ENCODE measurements at regions of chr12 and their contacts with region 1.

Region 1: GRCh38 chr12:39103552-39104165 is 198.3 kb upstream of the CPNE8 start:
- DNase-seq: peak; percentile 30
- H3K4me3 ChIP-seq: no peak overlapping the region
- H3K27ac ChIP-seq: no peak overlapping the region
- H3K4me1 ChIP-seq: no peaks in the 10 kb centered on the region
- H3K27me3 ChIP-seq: no peaks in the 10 kb centered on the region
- CTCF ChIP-seq: peak; percentile 61

Region 2: DNA sequence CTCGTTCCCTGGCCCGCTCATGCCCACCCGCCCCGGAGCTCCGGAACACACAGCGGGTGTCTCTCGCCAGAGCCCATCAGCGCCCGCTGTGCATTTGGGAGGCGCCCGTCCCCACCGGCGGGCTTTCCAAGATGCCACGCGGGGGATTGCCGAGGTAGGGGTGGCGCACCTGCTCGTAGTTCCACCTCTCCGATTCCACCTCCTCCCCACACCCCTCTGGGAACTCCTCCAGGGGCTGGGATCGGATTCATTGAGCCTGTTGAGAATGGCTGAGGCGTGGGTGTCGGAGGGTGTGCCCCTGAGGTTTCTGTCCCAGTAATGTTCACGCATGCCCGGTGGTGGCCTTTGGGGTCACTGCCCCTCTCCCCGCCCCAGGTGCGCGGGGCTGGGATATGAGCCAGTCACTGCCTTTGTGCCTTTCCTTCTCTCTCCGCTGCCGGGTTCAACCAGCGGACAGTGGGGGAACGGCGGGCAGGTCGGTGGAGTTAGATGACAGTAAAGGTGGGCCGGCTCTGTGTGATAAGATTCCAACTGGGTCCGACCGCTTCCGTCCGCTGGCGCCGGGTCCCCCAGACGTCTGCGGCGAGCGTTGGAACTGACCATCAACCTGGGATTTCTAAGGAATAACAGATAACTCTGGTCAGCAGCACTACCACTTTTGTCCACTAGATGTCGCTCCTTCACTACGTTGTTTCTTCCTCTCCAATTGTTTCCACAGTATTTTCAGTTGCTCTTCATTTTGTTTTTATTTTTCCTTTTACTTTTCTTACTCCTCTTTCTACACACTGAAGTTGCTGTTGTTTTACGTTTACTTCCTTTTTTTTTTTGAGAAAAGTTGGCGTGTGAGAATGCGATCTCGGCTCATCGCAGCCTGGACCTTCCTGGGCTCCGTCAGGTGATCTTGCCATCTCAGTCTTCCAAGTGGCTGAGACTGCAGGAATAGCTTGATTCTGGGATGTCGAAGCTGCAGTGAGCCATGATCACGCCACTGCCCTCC is 965.1 kb before region 1 on chr12:
- intact Hi-C with region 1: loop called (anchors 10 kb)
- DNase-seq: peak; percentile 79
- H3K4me3 ChIP-seq: peak overlapping the region; percentile 37
- H3K27ac ChIP-seq: no peak overlapping the region
- H3K4me1 ChIP-seq: peaks cover 4% of the 10 kb centered on the region
- H3K27me3 ChIP-seq: no peaks in the 10 kb centered on the region
- CTCF ChIP-seq: peak; percentile 97

Region 3: DNA sequence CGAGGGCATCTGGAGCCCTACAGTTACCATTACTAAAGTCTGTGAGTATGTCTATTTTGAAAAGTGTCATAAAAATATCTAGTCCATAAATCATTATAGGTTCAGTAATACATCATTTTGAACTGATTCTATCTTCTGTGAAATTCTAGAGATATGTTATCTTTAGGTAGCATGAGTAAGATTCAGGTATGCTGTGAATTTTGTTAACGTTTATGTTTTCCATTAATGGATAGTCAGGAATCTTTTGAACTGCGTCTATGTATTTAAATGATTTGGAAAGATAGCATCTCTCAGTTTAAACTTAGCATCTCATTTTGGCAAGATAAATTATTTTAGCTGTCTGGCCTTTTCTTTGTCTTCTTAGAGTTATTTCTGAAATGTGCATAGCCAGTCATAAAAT is 778.8 kb before region 1 on chr12:
- intact Hi-C with region 1: loop called (anchors 10 kb)
- DNase-seq: no peak
- H3K4me3 ChIP-seq: no peak overlapping the region
- H3K27ac ChIP-seq: no peak overlapping the region
- H3K4me1 ChIP-seq: no peaks in the 10 kb centered on the region
- H3K27me3 ChIP-seq: no peaks in the 10 kb centered on the region
- CTCF ChIP-seq: no peak

Region 4: DNA sequence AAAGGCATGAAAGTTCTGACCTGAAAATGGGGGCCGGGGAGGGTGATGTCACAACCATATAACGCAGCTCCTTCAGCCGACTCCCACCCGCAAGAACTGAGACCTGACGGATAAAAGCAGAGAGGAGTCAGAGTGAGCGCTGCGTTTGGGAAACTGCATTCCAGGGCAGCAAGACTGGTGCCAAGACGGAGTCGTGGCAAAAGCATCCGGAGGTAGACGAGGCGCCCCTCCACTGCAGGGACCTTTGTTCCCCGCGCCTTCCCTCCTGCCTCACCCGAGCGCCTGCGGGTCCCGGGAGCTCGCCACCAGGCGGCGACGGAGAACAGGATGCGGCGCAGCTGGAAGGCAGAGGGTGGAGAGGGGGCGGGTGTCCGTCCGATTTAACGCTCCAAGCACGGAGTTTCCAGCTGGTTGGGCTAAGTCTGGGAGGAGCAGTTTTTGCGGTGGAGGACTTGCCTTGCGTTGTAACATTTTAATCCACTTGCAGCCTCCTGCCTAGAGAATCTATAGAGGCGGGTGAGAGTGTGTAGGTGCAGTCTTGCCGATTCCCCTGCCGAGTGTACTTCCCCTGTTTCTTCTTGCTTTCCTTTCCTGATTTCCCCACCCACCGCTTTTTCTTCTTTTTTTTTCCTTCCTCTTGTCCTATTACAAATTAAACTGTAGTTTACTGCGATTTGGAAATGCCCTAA is 197.0 kb before region 1 on chr12:
- intact Hi-C with region 1: loop called (anchors 5 kb)
- DNase-seq: peak; percentile 94
- H3K4me3 ChIP-seq: peak overlapping the region; percentile 58
- H3K27ac ChIP-seq: peak overlapping the region; percentile 97
- H3K4me1 ChIP-seq: no peaks in the 10 kb centered on the region
- H3K27me3 ChIP-seq: no peaks in the 10 kb centered on the region
- CTCF ChIP-seq: peak; percentile 75

Region 5: DNA sequence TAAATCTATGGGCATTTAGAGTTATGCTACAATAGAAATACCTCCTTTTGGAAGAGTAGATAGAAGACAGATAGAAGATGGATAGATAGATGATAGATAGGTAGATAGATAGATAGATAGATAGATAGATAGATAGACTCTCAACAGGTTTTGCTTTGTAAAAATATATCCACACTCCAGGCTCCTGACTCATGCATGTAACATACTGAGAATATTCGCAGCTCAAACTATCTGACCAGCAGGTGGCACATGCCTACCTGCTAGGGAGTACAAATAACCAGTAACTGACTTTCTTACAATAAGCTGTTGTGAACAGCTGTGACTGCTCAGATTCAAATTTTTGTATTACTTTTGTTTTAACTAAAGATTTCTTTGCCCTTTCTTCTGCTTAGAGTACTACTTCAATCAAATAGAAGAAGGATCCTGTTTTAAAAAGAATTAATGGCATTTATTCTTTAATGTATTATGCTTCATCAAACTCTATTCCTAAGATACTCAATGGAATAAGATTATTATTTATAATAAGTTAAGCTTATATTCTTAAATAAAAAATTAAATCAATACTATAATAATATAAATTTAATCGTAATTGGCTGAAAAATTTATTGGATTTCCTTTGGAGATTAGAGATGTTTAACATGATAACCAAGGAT is 182.5 kb before region 1 on chr12:
- intact Hi-C with region 1: loop called (anchors 5 kb)
- DNase-seq: peak; percentile 50
- H3K4me3 ChIP-seq: no peak overlapping the region
- H3K27ac ChIP-seq: no peak overlapping the region
- H3K4me1 ChIP-seq: no peaks in the 10 kb centered on the region
- H3K27me3 ChIP-seq: no peaks in the 10 kb centered on the region
- CTCF ChIP-seq: peak; percentile 48